ENCODE measurements at regions of chr1 and their contacts with region 1.

Region 1: DNA sequence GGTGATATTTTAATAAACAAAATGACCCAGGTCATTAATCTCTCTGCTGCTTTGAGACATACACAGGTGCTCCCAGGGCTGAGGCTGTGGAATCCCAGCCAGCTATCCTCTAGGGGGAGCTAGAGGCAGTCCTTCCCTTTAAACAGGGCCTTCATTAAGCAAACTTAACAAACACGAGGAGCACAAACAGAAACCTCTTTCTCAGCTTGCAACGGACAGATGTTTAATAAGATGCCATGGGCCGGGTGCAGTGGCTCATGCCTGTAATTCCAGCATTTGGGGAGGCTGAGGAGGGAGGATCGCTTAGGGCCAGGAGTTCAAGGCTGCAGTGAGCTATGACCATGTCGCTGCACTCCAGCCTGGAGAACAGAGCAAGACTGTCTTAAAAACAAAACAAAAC is 106.7 kb downstream of the HIVEP3 start:
- DNase-seq: peak; percentile 74
- H3K4me3 Mint-ChIP-seq: no peak overlapping the region
- H3K27ac Mint-ChIP-seq: peak overlapping the region; percentile 18
- H3K4me1 Mint-ChIP-seq: peaks cover 50% of the 10 kb centered on the region
- H3K27me3 Mint-ChIP-seq: no peaks in the 10 kb centered on the region

Region 2: DNA sequence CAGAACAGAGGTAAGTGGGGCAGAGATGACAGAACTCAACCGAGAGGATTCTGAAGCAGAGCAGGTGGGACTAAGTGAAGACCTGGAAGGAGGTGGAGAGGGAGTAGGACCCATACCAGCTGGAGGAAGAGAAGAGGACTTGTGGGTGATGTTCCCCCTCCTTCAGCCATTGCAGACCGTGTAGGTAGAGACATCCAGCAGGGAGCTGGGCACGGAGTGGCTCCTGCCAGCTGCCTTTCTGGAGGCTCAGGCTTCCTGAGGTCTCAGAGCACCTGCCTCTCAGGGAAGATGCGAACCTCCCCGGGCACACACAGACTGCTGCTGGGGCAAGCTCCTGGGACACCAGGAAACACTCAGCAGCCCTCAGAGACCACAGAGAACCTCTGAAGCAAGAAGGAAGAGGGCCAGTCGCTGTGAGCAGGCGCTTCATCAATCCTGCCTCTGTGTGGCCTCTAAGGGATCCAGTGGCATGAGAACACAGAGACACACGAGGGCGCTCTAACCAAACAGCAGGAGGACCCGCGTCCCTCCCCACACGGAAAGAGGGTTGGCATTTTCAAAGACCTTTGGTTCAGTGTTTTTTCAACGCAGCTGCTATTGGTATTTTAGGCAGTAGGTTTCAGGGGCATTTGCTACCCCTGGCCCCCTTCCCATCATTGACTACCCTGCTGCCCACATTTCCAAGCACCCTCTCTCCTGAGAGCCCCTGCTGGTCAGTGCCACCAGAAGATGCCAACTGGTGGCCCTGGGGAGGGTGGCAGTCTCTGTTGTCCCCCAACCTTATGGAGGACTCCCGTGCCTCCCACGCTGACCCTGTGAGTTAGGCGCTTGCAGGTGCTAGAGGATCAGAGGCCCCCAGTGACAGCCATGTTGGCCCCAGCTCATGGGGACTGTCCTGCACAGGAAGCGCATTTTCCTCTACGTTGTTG is 238.0 kb before region 1 on chr1:
- CTCF ChIA-PET with region 1: interaction called, 61 read pairs
- POLR2A ChIA-PET with region 1: interaction called, 3 read pairs
- DNase-seq: peak; percentile 88
- H3K4me3 Mint-ChIP-seq: no peak overlapping the region
- H3K27ac Mint-ChIP-seq: peak overlapping the region; percentile 12
- H3K4me1 Mint-ChIP-seq: peaks cover 24% of the 10 kb centered on the region
- H3K27me3 Mint-ChIP-seq: no peaks in the 10 kb centered on the region

Region 3: GRCh38 chr1:41626616-41627375 is 185.3 kb before region 1 on chr1:
- CTCF ChIA-PET with region 1: no interaction called
- POLR2A ChIA-PET with region 1: no interaction called
- DNase-seq: peak; percentile 16
- H3K4me3 Mint-ChIP-seq: no peak overlapping the region
- H3K27ac Mint-ChIP-seq: no peak overlapping the region
- H3K4me1 Mint-ChIP-seq: peaks cover 47% of the 10 kb centered on the region
- H3K27me3 Mint-ChIP-seq: no peaks in the 10 kb centered on the region

Region 4: GRCh38 chr1:41751804-41752513 is 60.1 kb before region 1 on chr1:
- CTCF ChIA-PET with region 1: interaction called, 11 read pairs
- POLR2A ChIA-PET with region 1: interaction called, 6 read pairs
- DNase-seq: no peak
- H3K4me3 Mint-ChIP-seq: no peak overlapping the region
- H3K27ac Mint-ChIP-seq: peak overlapping the region; percentile 92
- H3K4me1 Mint-ChIP-seq: peaks cover 72% of the 10 kb centered on the region
- H3K27me3 Mint-ChIP-seq: no peaks in the 10 kb centered on the region

Region 5: GRCh38 chr1:41891199-41891896 is 79.3 kb after region 1 on chr1:
- CTCF ChIA-PET with region 1: interaction called, 26 read pairs
- POLR2A ChIA-PET with region 1: interaction called, 3 read pairs
- DNase-seq: peak; percentile 70
- H3K4me3 Mint-ChIP-seq: peak overlapping the region; percentile 79
- H3K27ac Mint-ChIP-seq: peak overlapping the region; percentile 94
- H3K4me1 Mint-ChIP-seq: peaks cover 75% of the 10 kb centered on the region
- H3K27me3 Mint-ChIP-seq: no peaks in the 10 kb centered on the region

Region 6: DNA sequence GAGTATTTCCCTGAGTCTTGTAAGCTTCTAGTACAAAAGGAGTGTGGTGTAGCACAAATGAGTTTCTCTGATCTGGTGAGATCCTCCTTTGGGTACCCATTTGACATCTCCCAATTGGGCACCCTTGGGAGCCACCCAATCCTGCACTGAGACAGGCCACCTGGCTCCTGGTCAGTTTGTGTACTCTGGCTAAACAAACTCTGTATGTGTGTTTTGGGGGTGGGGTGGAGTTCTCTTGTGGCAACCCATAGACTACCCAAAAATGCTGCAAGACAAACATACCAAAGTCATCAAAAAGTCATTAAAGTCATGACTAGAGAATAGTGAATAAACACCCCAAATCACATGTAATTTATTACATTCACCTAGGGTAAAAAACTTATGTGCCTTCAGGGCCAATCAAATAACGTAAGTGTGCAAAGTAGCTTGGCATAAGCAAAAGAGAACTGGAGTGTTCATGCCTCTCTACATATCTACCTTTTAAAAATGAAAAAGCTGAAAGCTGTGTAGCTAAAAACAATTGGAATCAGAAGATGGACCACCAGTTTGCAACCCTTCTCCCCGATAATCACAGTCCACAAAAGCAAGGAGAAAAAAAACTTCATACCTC is 115.2 kb after region 1 on chr1:
- CTCF ChIA-PET with region 1: no interaction called
- POLR2A ChIA-PET with region 1: no interaction called
- DNase-seq: no peak
- H3K4me3 Mint-ChIP-seq: no peak overlapping the region
- H3K27ac Mint-ChIP-seq: no peak overlapping the region
- H3K4me1 Mint-ChIP-seq: peaks cover 4% of the 10 kb centered on the region
- H3K27me3 Mint-ChIP-seq: peaks cover 2% of the 10 kb centered on the region

Region 7: GRCh38 chr1:41963636-41964035 is 151.6 kb after region 1 on chr1:
- CTCF ChIA-PET with region 1: no interaction called
- POLR2A ChIA-PET with region 1: no interaction called
- DNase-seq: no peak
- H3K4me3 Mint-ChIP-seq: no peak overlapping the region
- H3K27ac Mint-ChIP-seq: no peak overlapping the region
- H3K4me1 Mint-ChIP-seq: no peaks in the 10 kb centered on the region
- H3K27me3 Mint-ChIP-seq: peaks cover 6% of the 10 kb centered on the region

Measured in activated CD4-positive, alpha-beta memory T cell treated with anti-CD3 and anti-CD28 coated beads, Interleukin-2, amount 10 ng/mL, durations not matched to agents 7 days and 5 days (primary cell).